ENCODE measurements at regions of chr6 and their contacts with region 1.

Region 1: GRCh38 chr6:77173472-77174074 is 289.7 kb downstream of the HTR1B start:
- DNase-seq: peak; percentile 10 to 50
- H3K4me3 ChIP-seq: no peak overlapping the region
- H3K27ac ChIP-seq: 0 out of 2 replicates have a peak overlapping the region, but pooled peaks have one; percentile 14
- H3K4me1 ChIP-seq: 0 out of 7 replicates have a peak, but pooled peaks cover 0 to 3% (median 0%) of the 10 kb centered on the region in 4 experiments
- H3K27me3 ChIP-seq: no peaks in the 10 kb centered on the region
- CTCF ChIP-seq: peak; percentile 38 to 86 (median 82)
- EP300 ChIP-seq: no peak
- POLR2A ChIP-seq: no peak
- RAD21 ChIP-seq: peak; percentile 87

Region 2: GRCh38 chr6:77457720-77458349 is 284.3 kb after region 1 on chr6:
- CTCF ChIA-PET with region 1: interaction called, 17 read pairs
- POLR2A ChIA-PET with region 1: no interaction called
- DNase-seq: peak in 1 of 2 experiments; percentile 84
- H3K4me3 ChIP-seq: no peak overlapping the region
- H3K27ac ChIP-seq: no peak overlapping the region
- H3K4me1 ChIP-seq: peaks cover 0 to 10% (median 10%) of the 10 kb centered on the region in 4 experiments
- H3K27me3 ChIP-seq: peaks cover 0 to 12% (median 8%) of the 10 kb centered on the region in 4 experiments; a peak in 6 of 7 replicates
- CTCF ChIP-seq: peak; percentile 61 to 83 (median 78)
- EP300 ChIP-seq: no peak
- POLR2A ChIP-seq: no peak
- RAD21 ChIP-seq: peak; percentile 88 to 89

Region 3: DNA sequence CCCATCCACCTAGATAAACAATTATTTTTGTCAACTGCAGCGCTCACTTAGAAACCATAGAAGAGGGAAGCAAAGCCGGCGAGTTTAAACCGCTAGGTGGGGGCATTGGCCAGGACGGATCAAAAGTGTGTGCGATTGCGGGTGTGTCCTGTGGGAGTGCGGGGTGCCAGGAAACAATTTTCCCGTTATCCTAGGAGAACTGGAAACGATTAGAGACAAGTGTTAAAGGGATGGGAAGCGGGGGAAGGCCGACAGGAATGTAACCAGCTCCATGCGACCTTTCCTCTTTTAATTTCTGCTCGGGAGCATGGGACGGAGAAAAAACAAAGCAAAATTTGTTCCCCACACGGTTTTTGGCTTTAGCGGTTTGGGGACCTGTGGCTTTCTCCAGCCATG is 292.5 kb after region 1 on chr6:
- CTCF ChIA-PET with region 1: interaction called, 11 read pairs
- POLR2A ChIA-PET with region 1: no interaction called
- DNase-seq: peak in 1 of 2 experiments; percentile 72
- H3K4me3 ChIP-seq: peak overlapping the region; percentile 81 to 90 (median 86)
- H3K27ac ChIP-seq: no peak overlapping the region
- H3K4me1 ChIP-seq: peaks cover 0 to 5% (median under 1%) of the 10 kb centered on the region in 4 experiments; a peak in 5 of 7 replicates
- H3K27me3 ChIP-seq: peaks cover 4 to 53% (median 46%) of the 10 kb centered on the region in 4 experiments
- CTCF ChIP-seq: peak; percentile 65 to 79 (median 68)
- EP300 ChIP-seq: no peak
- POLR2A ChIP-seq: no peak
- RAD21 ChIP-seq: peak; percentile 75 to 84

Measured in H1 (cell line).